Activated CD4-positive, alpha-beta T cell treated with anti-CD3 and anti-CD28 coated beads, Interleukin-2, amount 10 ng/mL, durations not matched to agents 24 days and 14 days (primary cell): ENCODE measurements at regions of chr3 and their contacts with region 1.

Region 1: DNA sequence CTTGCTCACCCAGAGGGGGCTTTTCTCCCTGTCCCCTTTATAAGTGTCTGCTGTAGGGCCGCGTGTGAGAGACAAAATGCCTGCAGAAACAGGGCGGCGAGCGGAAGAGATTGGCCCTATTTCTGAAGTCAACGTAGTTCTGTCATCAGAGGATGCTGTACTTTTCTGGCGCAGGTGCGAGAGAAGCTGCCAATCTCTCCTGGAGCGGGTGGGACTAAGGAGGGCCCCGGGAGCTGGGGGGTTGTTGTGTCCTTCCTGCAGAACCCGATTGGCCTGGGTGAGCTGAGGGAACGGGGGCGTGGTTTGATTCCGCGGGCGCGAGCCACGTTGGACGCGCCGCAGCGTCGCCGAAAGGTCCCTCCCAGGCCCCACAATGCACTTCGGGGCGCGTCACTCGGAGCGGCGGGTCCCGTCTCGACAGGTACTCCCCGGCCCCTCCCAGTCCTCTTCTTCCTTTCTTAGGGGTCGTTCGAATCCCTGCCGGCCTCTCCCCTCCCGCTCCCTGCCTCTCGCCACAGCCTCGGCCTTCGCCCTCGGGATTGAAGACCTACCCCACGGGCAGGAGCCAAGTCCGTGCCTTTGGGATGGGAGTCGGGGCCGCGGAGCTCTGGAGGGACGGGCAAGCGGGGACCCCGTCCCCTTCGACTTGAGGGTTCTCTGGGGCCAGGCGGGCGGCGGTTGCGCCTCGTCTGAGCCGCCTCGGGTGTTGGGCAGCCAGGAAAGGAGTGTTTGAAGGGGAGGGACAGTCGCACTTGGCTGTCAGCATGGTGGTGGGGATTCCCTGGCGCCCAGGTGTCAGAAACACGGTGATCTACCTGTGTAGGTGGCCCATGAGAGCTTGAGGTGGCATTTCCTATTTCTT is at the start of gene SEC22A:
- DNase-seq: peak; percentile 99
- H3K4me3 Mint-ChIP-seq: peak within 1 kb of the TSS; percentile 93
- H3K27ac Mint-ChIP-seq: peak within 1 kb of the TSS; percentile 97
- H3K4me1 Mint-ChIP-seq: peaks cover 14% of the 10 kb centered on the region
- H3K27me3 Mint-ChIP-seq: peaks cover 4% of the 10 kb centered on the region
- total RNA-seq, gene SEC22A: 16.3 and 18.7 TPM in 2 replicates

Region 2: GRCh38 chr3:122754929-122755328 is 446.9 kb before region 1 on chr3:
- intact Hi-C with region 1: no loop called
- DNase-seq: peak; percentile 78
- H3K4me3 Mint-ChIP-seq: no peak overlapping the region
- H3K27ac Mint-ChIP-seq: no peak overlapping the region
- H3K4me1 Mint-ChIP-seq: no peaks in the 10 kb centered on the region
- H3K27me3 Mint-ChIP-seq: no peaks in the 10 kb centered on the region

Region 3: DNA sequence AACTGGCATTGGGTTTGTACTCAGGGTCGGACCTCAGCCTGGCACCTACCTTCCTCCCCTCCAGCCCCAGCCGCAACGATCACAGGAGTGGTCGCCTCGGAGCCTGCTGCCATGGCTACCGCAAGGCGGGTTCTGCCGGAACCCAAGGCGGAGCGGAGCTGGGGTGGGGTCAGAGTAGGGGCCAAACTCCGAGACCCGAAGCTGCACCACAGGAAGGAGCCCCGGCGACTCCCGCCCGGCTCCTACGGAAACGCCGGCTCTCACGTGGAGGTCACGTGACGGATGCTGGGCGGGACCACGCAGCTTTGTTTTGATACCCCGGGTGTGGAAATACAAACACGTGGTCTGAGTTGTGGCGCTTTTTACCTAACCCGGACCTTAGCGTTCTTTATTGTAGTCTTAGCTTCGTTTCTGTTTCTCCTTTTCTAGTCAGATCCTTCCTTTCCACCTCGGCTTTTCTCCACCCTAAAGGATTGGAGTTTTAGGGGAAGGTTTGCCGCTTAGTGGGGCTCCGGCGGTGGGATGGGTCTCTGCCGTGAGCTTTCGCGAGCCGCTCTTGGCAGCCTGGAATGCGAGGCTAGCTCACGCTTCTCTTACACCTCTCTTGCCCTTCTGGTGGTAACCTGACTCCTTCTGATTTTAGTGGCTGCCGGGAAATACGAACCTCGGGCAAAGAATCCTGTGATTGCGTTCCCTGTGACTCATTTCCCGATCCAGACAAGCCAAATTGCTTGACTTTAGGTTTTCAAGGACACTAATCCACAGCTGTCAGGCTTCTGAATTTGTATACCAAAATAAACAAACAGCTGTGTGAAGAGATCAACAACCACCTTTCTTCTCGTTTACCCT is 408.0 kb before region 1 on chr3 and contains the start of gene HSPBAP1:
- intact Hi-C with region 1: loop called (anchors 5 kb)
- DNase-seq: peak; percentile 97
- H3K4me3 Mint-ChIP-seq: peak within 1 kb of the TSS; percentile 90
- H3K27ac Mint-ChIP-seq: peak within 1 kb of the TSS; percentile 88
- H3K4me1 Mint-ChIP-seq: peaks cover 32% of the 10 kb centered on the region
- H3K27me3 Mint-ChIP-seq: no peaks in the 10 kb centered on the region
- total RNA-seq, gene HSPBAP1: 7.5 and 8.7 TPM in 2 replicates

Region 4: DNA sequence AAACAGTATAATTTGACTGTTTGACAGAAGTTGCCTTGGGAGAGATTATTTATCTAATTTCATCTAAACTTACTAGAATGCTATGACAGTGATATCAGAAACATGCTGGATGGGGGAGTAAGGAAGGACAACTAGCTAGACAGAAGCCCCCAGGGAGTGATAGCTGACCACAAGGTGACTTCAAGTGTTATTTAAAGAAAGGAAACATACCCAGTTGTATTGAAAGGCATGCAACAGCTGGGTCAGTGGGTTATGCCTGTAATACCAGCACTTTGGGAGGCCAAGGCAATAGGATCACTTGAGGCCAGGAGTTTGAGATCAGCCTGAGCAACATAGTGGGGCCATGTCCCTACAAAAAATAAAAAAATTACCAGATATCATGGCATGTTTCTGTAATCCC is 337.3 kb before region 1 on chr3:
- intact Hi-C with region 1: no loop called
- DNase-seq: peak; percentile 43
- H3K4me3 Mint-ChIP-seq: no peak overlapping the region
- H3K27ac Mint-ChIP-seq: no peak overlapping the region
- H3K4me1 Mint-ChIP-seq: no peaks in the 10 kb centered on the region
- H3K27me3 Mint-ChIP-seq: no peaks in the 10 kb centered on the region

Region 5: DNA sequence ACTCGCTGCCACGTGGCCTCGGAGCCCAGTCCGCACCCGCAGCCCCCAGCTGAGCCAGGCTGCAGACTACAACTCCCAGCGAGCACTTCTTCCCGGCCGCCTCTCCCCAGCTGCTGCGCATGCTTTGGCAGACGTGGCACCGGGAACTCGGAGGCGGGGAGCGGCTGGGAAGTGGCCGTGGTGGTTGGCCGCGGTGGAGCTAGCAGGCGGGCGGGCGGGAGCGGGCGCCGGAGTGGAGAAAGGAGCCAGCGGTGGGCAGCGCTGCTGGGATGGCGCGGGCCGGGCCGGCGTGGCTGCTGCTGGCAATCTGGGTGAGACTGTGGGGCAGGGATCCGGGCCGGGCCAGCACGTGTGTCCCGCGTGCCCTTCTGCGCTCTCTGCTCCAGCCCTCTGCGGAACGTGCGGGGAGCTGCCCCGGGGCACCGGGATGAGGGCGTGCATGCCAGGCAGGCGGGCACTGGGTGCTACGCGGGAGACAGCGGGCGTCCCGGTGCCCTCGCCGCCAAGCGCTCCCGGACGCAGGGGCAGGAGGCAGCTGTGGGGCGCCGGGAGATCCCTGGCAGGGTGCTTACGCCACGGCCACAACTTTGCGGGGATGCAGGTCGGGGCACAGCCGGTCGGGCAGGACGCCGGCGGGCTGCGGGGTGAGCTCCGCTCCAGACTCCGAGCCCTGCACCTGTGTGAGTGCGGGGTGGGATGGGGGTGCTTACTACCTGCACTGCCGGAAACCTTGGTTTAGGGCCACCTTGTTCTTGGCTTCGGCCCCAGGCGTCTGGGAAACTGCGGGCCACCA is 134.7 kb before region 1 on chr3 and contains the start of gene PDIA5:
- intact Hi-C with region 1: loop called (anchors 1 kb)
- DNase-seq: peak; percentile 90
- H3K4me3 Mint-ChIP-seq: peak within 1 kb of the TSS; percentile 95
- H3K27ac Mint-ChIP-seq: peak within 1 kb of the TSS; percentile 75
- H3K4me1 Mint-ChIP-seq: peaks cover 42% of the 10 kb centered on the region
- H3K27me3 Mint-ChIP-seq: peaks cover 2% of the 10 kb centered on the region
- total RNA-seq, gene PDIA5: 25.6 and 29.4 TPM in 2 replicates

Region 6: GRCh38 chr3:123584988-123585937 is 383.5 kb after region 1 on chr3 and contains the start of gene HACD2:
- intact Hi-C with region 1: loop called (anchors 1 kb)
- DNase-seq: peak; percentile 98
- H3K4me3 Mint-ChIP-seq: no peak within 1 kb of the TSS
- H3K27ac Mint-ChIP-seq: peak within 1 kb of the TSS; percentile 74
- H3K4me1 Mint-ChIP-seq: peaks cover 16% of the 10 kb centered on the region
- H3K27me3 Mint-ChIP-seq: no peaks in the 10 kb centered on the region
- total RNA-seq, gene HACD2: 28.4 and 31.8 TPM in 2 replicates